HCT116 (cell line): ENCODE measurements at regions of chr4 and their contacts with region 1.

Region 1: GRCh38 chr4:105520817-105521790 is 31.3 kb upstream of the ARHGEF38 start:
- DNase-seq: peak; percentile 32
- ATAC-seq: peak; percentile 92
- H3K4me3 ChIP-seq: no peak overlapping the region
- H3K27ac ChIP-seq: no peak overlapping the region
- H3K4me1 ChIP-seq: no peaks in the 10 kb centered on the region
- H3K27me3 ChIP-seq: no peaks in the 10 kb centered on the region
- CTCF ChIP-seq: peak; percentile 47 to 79 (median 71); a peak in 5 of 6 replicates
- POLR2A ChIP-seq: no peak
- RAD21 ChIP-seq: peak; percentile 71

Region 2: GRCh38 chr4:105146276-105147015 is 374.7 kb before region 1 on chr4 and contains the start of gene TET2:
- CTCF ChIA-PET with region 1: no interaction called
- POLR2A ChIA-PET with region 1: no interaction called
- RAD21 ChIA-PET with region 1: no interaction called
- intact Hi-C with region 1: no loop called
- DNase-seq: peak; percentile 68
- ATAC-seq: peak; percentile 85
- H3K4me3 ChIP-seq: peak within 1 kb of the TSS; percentile 70 to 79
- H3K27ac ChIP-seq: peak within 1 kb of the TSS; percentile 73
- H3K4me1 ChIP-seq: peaks cover 6 to 18% of the 10 kb centered on the region in 2 experiments; a peak in 3 of 4 replicates
- H3K27me3 ChIP-seq: no peaks in the 10 kb centered on the region
- CTCF ChIP-seq: no peak
- POLR2A ChIP-seq: peak; percentile 57
- RAD21 ChIP-seq: no peak
- total RNA-seq, gene TET2: 9.7 TPM

Region 3: DNA sequence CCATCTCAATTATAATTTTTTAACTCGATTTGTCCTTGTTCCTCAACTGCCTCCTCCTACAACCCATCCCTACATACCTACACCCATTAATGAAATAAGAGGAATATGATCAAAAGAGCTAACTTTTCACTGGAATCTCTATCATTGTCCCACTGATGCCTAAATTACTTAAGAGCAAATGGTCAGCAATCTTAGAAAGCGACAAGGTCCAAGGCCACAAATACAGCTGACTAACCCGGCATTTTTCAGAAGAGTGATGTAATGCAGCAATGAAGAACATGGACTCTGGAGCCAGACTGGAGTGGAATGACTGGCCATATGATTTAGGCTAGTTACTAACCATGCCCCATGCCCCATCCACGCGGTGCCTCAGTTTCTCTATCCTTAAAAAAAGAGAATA is 103.5 kb before region 1 on chr4:
- CTCF ChIA-PET with region 1: no interaction called
- POLR2A ChIA-PET with region 1: no interaction called
- RAD21 ChIA-PET with region 1: no interaction called
- intact Hi-C with region 1: no loop called
- DNase-seq: no peak
- ATAC-seq: no peak
- H3K4me3 ChIP-seq: no peak overlapping the region
- H3K27ac ChIP-seq: no peak overlapping the region
- H3K4me1 ChIP-seq: no peaks in the 10 kb centered on the region
- H3K27me3 ChIP-seq: no peaks in the 10 kb centered on the region
- CTCF ChIP-seq: no peak
- POLR2A ChIP-seq: no peak
- RAD21 ChIP-seq: no peak

Region 4: DNA sequence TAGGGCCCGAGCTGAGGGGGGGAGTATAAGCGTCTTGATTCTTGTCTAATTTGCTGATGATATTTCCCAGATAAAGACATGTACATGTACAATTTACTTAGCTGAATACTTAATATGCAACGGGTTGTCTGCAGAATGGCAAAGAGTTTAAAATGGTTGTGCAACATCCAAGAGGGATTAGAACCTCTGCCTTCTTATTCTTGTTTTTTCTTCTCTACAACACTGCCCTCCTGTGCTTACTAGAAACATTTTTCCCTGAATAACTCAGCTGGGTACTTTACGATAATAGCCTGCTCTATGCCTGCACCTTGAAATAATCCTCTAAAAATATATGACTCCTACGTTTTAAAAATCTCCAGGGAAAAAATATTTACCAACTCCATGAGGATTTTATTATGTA is 145.6 kb after region 1 on chr4:
- CTCF ChIA-PET with region 1: interaction called, 6 read pairs
- POLR2A ChIA-PET with region 1: no interaction called
- RAD21 ChIA-PET with region 1: interaction called in 1 of 2 experiments, 3 read pairs
- intact Hi-C with region 1: loop called (anchors 2 kb)
- DNase-seq: no peak
- ATAC-seq: peak; percentile 73
- H3K4me3 ChIP-seq: no peak overlapping the region
- H3K27ac ChIP-seq: no peak overlapping the region
- H3K4me1 ChIP-seq: no peaks in the 10 kb centered on the region
- H3K27me3 ChIP-seq: no peaks in the 10 kb centered on the region
- CTCF ChIP-seq: peak; percentile 21 to 36 (median 32); a peak in 4 of 6 replicates
- POLR2A ChIP-seq: no peak
- RAD21 ChIP-seq: peak; percentile 59

Region 5: DNA sequence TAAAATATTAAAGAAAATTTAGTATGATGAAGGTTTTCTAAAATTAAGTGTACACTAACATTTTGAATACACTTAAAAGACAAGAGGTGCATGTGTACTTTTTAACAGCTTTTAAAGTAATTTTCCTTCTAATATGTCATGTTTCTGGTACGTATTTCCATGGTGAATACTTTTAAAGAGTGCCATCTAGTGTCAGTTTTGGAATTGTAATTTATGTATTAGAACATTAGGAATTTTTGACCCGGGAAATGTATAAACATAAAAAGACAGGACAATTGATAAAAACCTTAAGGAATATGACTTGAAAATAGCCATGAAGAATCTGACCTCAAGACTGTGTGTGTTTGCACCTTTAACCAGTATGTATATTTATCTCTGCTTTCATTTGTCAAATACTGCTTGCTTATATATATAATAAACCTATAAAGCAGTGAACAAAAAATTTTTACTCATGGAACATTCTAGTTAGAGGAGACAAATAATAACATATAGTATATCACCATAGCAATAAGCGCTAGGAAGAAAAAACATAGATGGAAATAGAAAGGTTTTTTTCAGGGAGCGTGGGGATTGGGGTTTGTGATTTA is 194.7 kb after region 1 on chr4:
- CTCF ChIA-PET with region 1: interaction called, 22 read pairs
- POLR2A ChIA-PET with region 1: no interaction called
- RAD21 ChIA-PET with region 1: no interaction called
- intact Hi-C with region 1: loop called (anchors 5 kb)
- DNase-seq: peak; percentile 13
- ATAC-seq: peak; percentile 50; the same call in 1 of the 2 replicates
- H3K4me3 ChIP-seq: no peak overlapping the region
- H3K27ac ChIP-seq: no peak overlapping the region
- H3K4me1 ChIP-seq: no peaks in the 10 kb centered on the region
- H3K27me3 ChIP-seq: no peaks in the 10 kb centered on the region
- CTCF ChIP-seq: peak; percentile 24 to 62 (median 44); a peak in 4 of 6 replicates
- POLR2A ChIP-seq: no peak
- RAD21 ChIP-seq: peak; percentile 58

Region 6: GRCh38 chr4:106201373-106201772 is 680.3 kb after region 1 on chr4:
- CTCF ChIA-PET with region 1: interaction called, 7 read pairs
- POLR2A ChIA-PET with region 1: no interaction called
- RAD21 ChIA-PET with region 1: interaction called in 1 of 2 experiments, 4 read pairs
- intact Hi-C with region 1: loop called (anchors 2 kb)
- DNase-seq: no peak
- ATAC-seq: peak; percentile 78
- H3K4me3 ChIP-seq: no peak overlapping the region
- H3K27ac ChIP-seq: no peak overlapping the region
- H3K4me1 ChIP-seq: no peaks in the 10 kb centered on the region
- H3K27me3 ChIP-seq: no peaks in the 10 kb centered on the region
- CTCF ChIP-seq: peak; percentile 49 to 71 (median 50); a peak in 5 of 6 replicates
- POLR2A ChIP-seq: no peak
- RAD21 ChIP-seq: peak; percentile 78

Region 7: DNA sequence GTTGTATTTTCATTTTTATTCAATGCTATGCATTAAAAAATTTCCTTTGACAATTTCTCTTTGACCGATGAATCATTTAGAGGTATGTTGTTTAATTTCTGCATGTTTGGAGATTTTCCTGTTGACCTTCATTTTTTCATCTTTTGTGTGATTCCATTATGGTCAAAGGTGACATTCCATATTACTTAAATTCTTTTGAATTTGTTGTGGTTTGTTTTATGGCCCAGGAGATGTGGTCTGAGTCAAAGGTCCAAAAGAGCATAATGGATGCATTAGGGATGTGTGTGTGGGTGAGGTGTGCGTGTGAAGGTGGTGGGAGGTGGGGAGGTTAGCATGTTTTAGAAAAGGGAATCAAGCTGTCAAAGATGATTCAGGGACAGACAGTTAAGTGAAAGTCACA is 923.5 kb after region 1 on chr4:
- CTCF ChIA-PET with region 1: no interaction called
- POLR2A ChIA-PET with region 1: no interaction called
- RAD21 ChIA-PET with region 1: no interaction called
- intact Hi-C with region 1: no loop called
- DNase-seq: peak; percentile 13
- ATAC-seq: peak; percentile 95
- H3K4me3 ChIP-seq: no peak overlapping the region
- H3K27ac ChIP-seq: no peak overlapping the region
- H3K4me1 ChIP-seq: peaks cover 5 to 18% of the 10 kb centered on the region in 2 experiments; a peak in 2 of 4 replicates
- H3K27me3 ChIP-seq: no peaks in the 10 kb centered on the region
- CTCF ChIP-seq: no peak
- POLR2A ChIP-seq: no peak
- RAD21 ChIP-seq: no peak